ENCODE measurements at regions of chr17 and their contacts with region 1.

Region 1: DNA sequence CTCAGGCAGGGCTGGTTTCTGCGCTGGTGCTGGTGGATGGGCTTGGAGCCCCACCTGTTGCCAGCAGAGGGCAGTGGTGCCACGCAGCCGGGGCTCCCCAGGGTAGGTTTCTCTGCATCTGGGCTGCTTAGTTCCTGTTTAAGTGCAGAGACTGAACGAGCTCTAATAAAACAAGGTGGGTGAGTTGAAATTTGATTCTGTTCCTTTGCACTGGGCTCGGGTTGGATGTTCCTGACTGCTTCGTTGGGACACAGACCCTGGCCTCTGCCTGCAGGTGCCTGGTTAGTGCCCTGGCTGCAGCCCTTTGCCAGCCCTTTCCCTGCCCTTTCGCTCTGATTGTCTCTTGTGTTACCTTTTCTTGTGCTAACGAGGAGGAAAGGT is 30.0 kb downstream of the TBCD start:
- DNase-seq: peak; percentile 88
- H3K4me3 Mint-ChIP-seq: no peak overlapping the region
- H3K27ac Mint-ChIP-seq: peak overlapping the region; percentile 38
- H3K4me1 Mint-ChIP-seq: peaks cover 10% of the 10 kb centered on the region
- H3K27me3 Mint-ChIP-seq: no peaks in the 10 kb centered on the region

Region 2: GRCh38 chr17:82804442-82805191 is 22.7 kb after region 1 on chr17:
- CTCF ChIA-PET with region 1: no interaction called
- POLR2A ChIA-PET with region 1: no interaction called
- intact Hi-C with region 1: no loop called
- DNase-seq: no peak
- H3K4me3 Mint-ChIP-seq: no peak overlapping the region
- H3K27ac Mint-ChIP-seq: no peak overlapping the region
- H3K4me1 Mint-ChIP-seq: peaks cover 5% of the 10 kb centered on the region
- H3K27me3 Mint-ChIP-seq: no peaks in the 10 kb centered on the region

Region 3: GRCh38 chr17:82892899-82893565 is 111.1 kb after region 1 on chr17:
- CTCF ChIA-PET with region 1: interaction called, 3 read pairs
- POLR2A ChIA-PET with region 1: no interaction called
- intact Hi-C with region 1: loop called (anchors 1 kb)
- DNase-seq: peak; percentile 82
- H3K4me3 Mint-ChIP-seq: peak overlapping the region; percentile 55
- H3K27ac Mint-ChIP-seq: peak overlapping the region; percentile 87
- H3K4me1 Mint-ChIP-seq: peaks cover 36% of the 10 kb centered on the region
- H3K27me3 Mint-ChIP-seq: no peaks in the 10 kb centered on the region

Region 4: GRCh38 chr17:82917691-82918345 is 135.9 kb after region 1 on chr17:
- CTCF ChIA-PET with region 1: interaction called, 20 read pairs
- POLR2A ChIA-PET with region 1: no interaction called
- intact Hi-C with region 1: no loop called
- DNase-seq: peak; percentile 52
- H3K4me3 Mint-ChIP-seq: no peak overlapping the region
- H3K27ac Mint-ChIP-seq: no peak overlapping the region
- H3K4me1 Mint-ChIP-seq: no peaks in the 10 kb centered on the region
- H3K27me3 Mint-ChIP-seq: no peaks in the 10 kb centered on the region

Measured in activated CD4-positive, alpha-beta memory T cell treated with anti-CD3 and anti-CD28 coated beads for 36 hours (primary cell).